ENCODE measurements at regions of chr7 and their contacts with region 1.

Region 1: GRCh38 chr7:143240291-143241168 is 18.7 kb downstream of the TAS2R40 start:
- DNase-seq: peak in 8 of 9 donors; percentile 54 to 82 (median 74)
- ATAC-seq: peak; percentile 95
- H3K4me3 ChIP-seq: no peak overlapping the region
- H3K4me3 Mint-ChIP-seq: peak overlapping the region in 5 of 10 donors; percentile 6 to 48 (median 30)
- H3K27ac ChIP-seq: no peak overlapping the region
- H3K27ac Mint-ChIP-seq: peak overlapping the region in 8 of 9 donors; percentile 1 to 71 (median 34)
- H3K4me1 ChIP-seq: peaks cover 14 to 17% of the 10 kb centered on the region in 2 donors
- H3K4me1 Mint-ChIP-seq: peaks cover 17 to 56% (median 32%) of the 10 kb centered on the region in 7 donors
- H3K27me3 ChIP-seq: no peaks in the 10 kb centered on the region
- H3K27me3 Mint-ChIP-seq: peaks cover under 1 to 21% (median 15%) of the 10 kb centered on the region in 5 donors

Region 2: DNA sequence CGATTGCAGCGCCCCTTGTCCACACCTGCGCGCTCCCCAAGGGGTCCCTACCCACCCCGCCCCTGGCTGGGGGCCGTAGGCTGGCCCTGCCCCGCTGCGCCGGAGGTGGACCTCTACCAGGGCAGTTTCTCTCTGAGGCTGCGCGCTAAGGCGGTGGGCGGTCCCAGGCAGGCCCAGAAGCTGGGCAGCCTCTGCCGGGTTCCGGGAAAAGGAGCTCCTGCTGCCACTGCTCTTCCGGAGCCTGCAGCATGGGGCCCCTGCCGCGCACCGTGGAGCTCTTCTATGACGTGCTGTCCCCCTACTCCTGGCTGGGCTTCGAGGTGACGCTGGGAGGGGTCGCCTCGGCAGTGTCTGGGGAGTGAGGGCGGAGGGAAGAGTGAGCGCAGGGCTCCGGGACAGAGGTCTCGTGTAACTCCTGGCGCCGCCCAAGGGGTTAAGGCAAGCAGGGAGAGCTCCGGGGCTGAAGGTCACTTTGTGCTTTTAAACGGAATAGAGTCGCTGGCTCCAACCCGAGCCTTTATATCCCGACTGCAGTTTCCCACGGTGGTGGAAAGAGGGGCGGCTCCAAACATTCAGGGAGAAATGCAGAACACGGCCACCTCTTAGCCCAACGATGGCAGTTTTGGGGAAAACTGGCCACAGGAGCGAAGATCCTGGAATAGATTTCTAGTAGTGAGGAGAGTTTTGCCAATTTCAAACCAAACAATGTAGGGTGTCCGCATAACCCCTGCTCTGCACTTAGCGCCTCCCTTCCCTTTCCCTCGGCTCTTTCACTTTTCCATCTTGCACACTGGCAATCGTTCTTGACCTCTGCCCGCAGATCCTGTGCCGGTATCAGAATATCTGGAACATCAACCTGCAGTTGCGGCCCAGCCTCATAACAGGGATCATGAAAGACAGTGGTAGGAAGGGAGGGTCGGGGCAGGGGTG is 23.0 kb after region 1 on chr7 and contains the start of gene GSTK1:
- CTCF ChIA-PET with region 1: interaction called, 72 read pairs
- POLR2A ChIA-PET with region 1: interaction called, 35 read pairs
- intact Hi-C with region 1: loop called (anchors 1 kb)
- DNase-seq: peak; percentile 62 to 86 (median 74)
- ATAC-seq: peak; percentile 97
- H3K4me3 ChIP-seq: peak within 1 kb of the TSS; percentile 90
- H3K4me3 Mint-ChIP-seq: peak within 1 kb of the TSS; percentile 93 to 99 (median 97)
- H3K27ac ChIP-seq: peak within 1 kb of the TSS; percentile 84
- H3K27ac Mint-ChIP-seq: peak within 1 kb of the TSS; percentile 76 to 99 (median 97)
- H3K4me1 ChIP-seq: peaks cover 34 to 40% of the 10 kb centered on the region in 2 donors
- H3K4me1 Mint-ChIP-seq: peaks cover 39 to 88% (median 66%) of the 10 kb centered on the region in 7 donors
- H3K27me3 ChIP-seq: no peaks in the 10 kb centered on the region
- H3K27me3 Mint-ChIP-seq: no peaks in the 10 kb centered on the region
- total RNA-seq, gene GSTK1: 253 to 385 (median 311) TPM

Region 3: GRCh38 chr7:143287935-143288826 is 47.7 kb after region 1 on chr7 and contains the start of gene CASP2:
- CTCF ChIA-PET with region 1: interaction called, 31 read pairs
- POLR2A ChIA-PET with region 1: interaction called, 18 read pairs
- intact Hi-C with region 1: loop called (anchors 1 kb)
- DNase-seq: peak; percentile 98 to 99 (median 99)
- ATAC-seq: peak; percentile 97
- H3K4me3 ChIP-seq: peak within 1 kb of the TSS; percentile 92
- H3K4me3 Mint-ChIP-seq: peak within 1 kb of the TSS; percentile 88 to 99 (median 95)
- H3K27ac ChIP-seq: peak within 1 kb of the TSS; percentile 85
- H3K27ac Mint-ChIP-seq: peak within 1 kb of the TSS; percentile 86 to 95 (median 93)
- H3K4me1 ChIP-seq: peaks cover 13 to 35% of the 10 kb centered on the region in 2 donors
- H3K4me1 Mint-ChIP-seq: peaks cover 41 to 66% (median 59%) of the 10 kb centered on the region in 7 donors
- H3K27me3 ChIP-seq: no peaks in the 10 kb centered on the region
- H3K27me3 Mint-ChIP-seq: no peaks in the 10 kb centered on the region
- total RNA-seq, gene CASP2: 29.6 to 97.7 (median 69.1) TPM

Region 4: GRCh38 chr7:143305423-143306070 is 65.0 kb after region 1 on chr7:
- CTCF ChIA-PET with region 1: interaction called, 177 read pairs
- POLR2A ChIA-PET with region 1: interaction called, 16 read pairs
- intact Hi-C with region 1: loop called (anchors 1 kb)
- DNase-seq: peak; percentile 32 to 62 (median 54)
- ATAC-seq: peak; percentile 87
- H3K4me3 ChIP-seq: no peak overlapping the region
- H3K4me3 Mint-ChIP-seq: peak overlapping the region in 1 of 10 donors; percentile 22
- H3K27ac ChIP-seq: no peak overlapping the region
- H3K27ac Mint-ChIP-seq: peak overlapping the region; percentile 4 to 85 (median 30)
- H3K4me1 ChIP-seq: peaks cover 0 to 2% of the 10 kb centered on the region in 2 donors
- H3K4me1 Mint-ChIP-seq: peaks cover 20 to 72% (median 37%) of the 10 kb centered on the region in 7 donors
- H3K27me3 ChIP-seq: no peaks in the 10 kb centered on the region
- H3K27me3 Mint-ChIP-seq: no peaks in the 10 kb centered on the region

Region 5: DNA sequence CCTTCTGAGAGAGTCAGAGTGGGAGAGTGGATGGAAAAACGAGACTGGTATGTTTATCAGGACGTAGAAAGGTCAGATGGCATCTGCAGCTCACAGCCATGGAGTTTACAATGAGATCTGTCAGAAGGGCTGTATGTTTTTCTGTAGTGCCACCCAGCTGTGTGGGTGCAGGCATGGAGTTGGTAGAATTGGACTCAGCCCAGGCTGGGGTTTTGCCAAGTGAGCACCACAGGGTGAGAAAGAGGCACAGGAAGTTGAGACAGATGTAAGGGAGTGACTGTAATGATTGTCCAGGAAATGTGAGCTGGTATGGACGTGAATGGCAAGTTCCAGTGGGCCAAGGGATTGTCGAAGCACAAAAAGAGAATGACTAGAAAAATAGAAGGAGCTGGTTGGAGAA is 131.5 kb after region 1 on chr7:
- CTCF ChIA-PET with region 1: interaction called, 10 read pairs
- POLR2A ChIA-PET with region 1: interaction called, 4 read pairs
- intact Hi-C with region 1: loop called in 1 of 2 experiments (anchors 1 kb)
- DNase-seq: peak in 5 of 9 donors; percentile 38 to 64 (median 46)
- ATAC-seq: peak; percentile 76
- H3K4me3 ChIP-seq: no peak overlapping the region
- H3K4me3 Mint-ChIP-seq: peak overlapping the region in 9 of 10 donors; percentile 13 to 67 (median 45)
- H3K27ac ChIP-seq: no peak overlapping the region
- H3K27ac Mint-ChIP-seq: peak overlapping the region in 8 of 9 donors; percentile 3 to 90 (median 70)
- H3K4me1 ChIP-seq: peaks cover 36 to 40% of the 10 kb centered on the region in 2 donors
- H3K4me1 Mint-ChIP-seq: peaks cover 34 to 59% (median 55%) of the 10 kb centered on the region in 7 donors
- H3K27me3 ChIP-seq: no peaks in the 10 kb centered on the region
- H3K27me3 Mint-ChIP-seq: peaks cover 0 to 22% (median 0%) of the 10 kb centered on the region in 5 donors

Region 6: GRCh38 chr7:143408686-143409561 is 168.4 kb after region 1 on chr7 and contains the start of gene EPHA1:
- CTCF ChIA-PET with region 1: interaction called, 32 read pairs
- POLR2A ChIA-PET with region 1: interaction called, 9 read pairs
- intact Hi-C with region 1: loop called in 1 of 2 experiments (anchors 1 kb)
- DNase-seq: peak in 7 of 9 donors; percentile 52 to 67 (median 62)
- ATAC-seq: peak; percentile 83
- H3K4me3 ChIP-seq: peak within 1 kb of the TSS; percentile 59
- H3K4me3 Mint-ChIP-seq: peak within 1 kb of the TSS; percentile 77 to 98 (median 94)
- H3K27ac ChIP-seq: peak within 1 kb of the TSS; percentile 69
- H3K27ac Mint-ChIP-seq: peak within 1 kb of the TSS; percentile 61 to 97 (median 94)
- H3K4me1 ChIP-seq: peaks cover 31 to 44% of the 10 kb centered on the region in 2 donors
- H3K4me1 Mint-ChIP-seq: peaks cover 23 to 88% (median 87%) of the 10 kb centered on the region in 7 donors
- H3K27me3 ChIP-seq: no peaks in the 10 kb centered on the region
- H3K27me3 Mint-ChIP-seq: peaks cover 0 to 14% (median 0%) of the 10 kb centered on the region in 5 donors
- total RNA-seq, gene EPHA1: 4.1 to 63.1 (median 33.6) TPM

Region 7: GRCh38 chr7:143422033-143422432 is 181.5 kb after region 1 on chr7:
- CTCF ChIA-PET with region 1: interaction called, 58 read pairs
- POLR2A ChIA-PET with region 1: interaction called, 4 read pairs
- intact Hi-C with region 1: loop called in 1 of 2 experiments (anchors 1 kb)
- DNase-seq: no peak
- ATAC-seq: no peak
- H3K4me3 ChIP-seq: no peak overlapping the region
- H3K4me3 Mint-ChIP-seq: no peak overlapping the region
- H3K27ac ChIP-seq: no peak overlapping the region
- H3K27ac Mint-ChIP-seq: peak overlapping the region in 2 of 9 donors; percentile 32 to 68
- H3K4me1 ChIP-seq: no peaks in the 10 kb centered on the region
- H3K4me1 Mint-ChIP-seq: peaks cover 8 to 43% (median 36%) of the 10 kb centered on the region in 7 donors
- H3K27me3 ChIP-seq: no peaks in the 10 kb centered on the region
- H3K27me3 Mint-ChIP-seq: peaks cover 0 to 16% (median 0%) of the 10 kb centered on the region in 5 donors

Measured in naive thymus-derived CD4-positive, alpha-beta T cell (primary cell).